T-cell (primary cell): ENCODE measurements at regions of chr2 and their contacts with region 1.

Region 1: GRCh38 chr2:160239436-160239835 is 39.4 kb upstream of the ITGB6 start:
- DNase-seq: no peak
- ATAC-seq: no peak
- H3K4me3 ChIP-seq: no peak overlapping the region
- H3K4me3 Mint-ChIP-seq: no peak overlapping the region
- H3K27ac ChIP-seq: no peak overlapping the region
- H3K27ac Mint-ChIP-seq: no peak overlapping the region
- H3K4me1 ChIP-seq: no peaks in the 10 kb centered on the region
- H3K4me1 Mint-ChIP-seq: no peaks in the 10 kb centered on the region
- H3K27me3 ChIP-seq: no peaks in the 10 kb centered on the region
- H3K27me3 Mint-ChIP-seq: no peaks in the 10 kb centered on the region

Region 2: GRCh38 chr2:160289126-160289525 is 49.7 kb after region 1 on chr2:
- CTCF ChIA-PET with region 1: interaction called in 1 of 2 experiments, 12 read pairs
- POLR2A ChIA-PET with region 1: no interaction called
- DNase-seq: no peak
- ATAC-seq: no peak
- H3K4me3 ChIP-seq: no peak overlapping the region
- H3K4me3 Mint-ChIP-seq: no peak overlapping the region
- H3K27ac ChIP-seq: no peak overlapping the region
- H3K27ac Mint-ChIP-seq: peak overlapping the region; percentile 65 to 84
- H3K4me1 ChIP-seq: no peaks in the 10 kb centered on the region
- H3K4me1 Mint-ChIP-seq: peaks cover 26 to 33% (median 28%) of the 10 kb centered on the region in 3 donors
- H3K27me3 ChIP-seq: no peaks in the 10 kb centered on the region
- H3K27me3 Mint-ChIP-seq: no peaks in the 10 kb centered on the region